Common myeloid progenitor, CD34-positive (primary cell): ENCODE measurements at regions of chr12 and their contacts with region 1.

Region 1: DNA sequence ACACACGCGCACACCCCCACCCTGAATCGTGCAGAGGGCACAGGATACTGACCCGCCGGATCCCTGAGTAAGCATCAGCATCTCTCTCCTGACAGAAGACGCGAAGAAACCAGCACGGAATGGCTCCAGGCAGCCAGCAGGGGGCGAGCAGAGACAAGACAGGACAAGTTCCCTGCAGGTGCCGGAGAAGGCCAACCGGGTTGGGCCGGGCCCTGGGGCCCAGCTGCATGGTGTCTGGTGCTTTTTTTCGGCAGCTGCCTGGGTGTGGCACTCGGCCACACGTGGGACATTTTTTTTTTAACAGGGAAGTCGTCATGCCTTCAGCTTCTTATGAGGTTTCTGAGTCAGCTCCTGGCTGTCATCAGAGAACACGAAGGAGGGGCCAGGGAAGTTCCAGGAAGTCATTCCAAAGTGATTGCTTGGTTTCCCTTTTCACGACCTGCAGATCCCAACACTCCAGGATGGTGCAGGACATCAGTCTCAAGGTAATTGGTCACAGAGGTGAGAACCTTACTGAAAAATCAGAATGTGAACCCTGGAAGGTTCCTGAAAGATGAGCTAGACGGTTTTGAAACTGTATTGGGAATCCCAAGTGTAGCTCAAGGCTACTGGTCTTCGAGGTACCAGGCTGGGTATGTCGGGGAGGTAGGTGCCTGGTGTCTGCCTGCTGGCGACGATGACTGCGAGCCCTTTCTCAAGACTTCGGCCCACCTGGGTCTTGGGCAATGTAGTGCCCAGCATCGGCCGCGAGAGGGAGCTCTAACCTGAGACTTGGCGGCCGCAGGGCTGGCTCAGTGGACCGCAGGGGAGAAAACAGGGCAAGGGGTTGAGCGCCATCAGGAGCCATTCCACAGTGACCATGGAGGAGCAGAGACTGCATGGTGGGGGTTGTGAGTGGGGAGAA is 190.8 kb upstream of the PRMT8 start:
- DNase-seq: peak; percentile 87 to 91 (median 90)
- H3K4me3 ChIP-seq: peak overlapping the region in 2 of 7 experiments; percentile 10 to 25
- H3K27ac ChIP-seq: no peak overlapping the region
- H3K4me1 ChIP-seq: peaks cover 0 to 9% (median 4%) of the 10 kb centered on the region in 4 experiments
- H3K27me3 ChIP-seq: peaks cover 0 to 66% (median 13%) of the 10 kb centered on the region in 5 experiments

Region 2: DNA sequence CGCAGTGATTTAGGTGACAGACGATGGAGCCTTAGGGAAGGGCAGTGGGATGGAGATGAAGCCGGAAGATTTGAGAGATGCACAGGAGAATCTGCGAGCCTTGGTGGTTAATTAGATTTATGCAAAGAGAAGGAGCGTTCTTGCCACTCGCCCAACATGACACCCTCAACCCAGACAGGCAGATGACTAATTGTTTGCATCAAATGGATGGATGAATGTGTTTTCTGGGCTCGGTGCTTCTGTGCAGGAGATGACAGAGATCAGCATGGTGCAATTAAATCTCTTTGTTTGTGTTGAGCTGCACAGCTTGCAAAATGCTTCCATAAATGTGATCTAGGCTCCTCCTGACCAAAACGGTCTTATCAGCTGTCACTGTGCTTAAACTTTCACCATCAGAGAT is 11.5 kb before region 1 on chr12:
- CTCF ChIA-PET with region 1: interaction called, 38 read pairs
- POLR2A ChIA-PET with region 1: no interaction called
- DNase-seq: no peak
- H3K4me3 ChIP-seq: no peak overlapping the region
- H3K27ac ChIP-seq: no peak overlapping the region
- H3K4me1 ChIP-seq: peaks cover 0 to 15% (median 2%) of the 10 kb centered on the region in 4 experiments
- H3K27me3 ChIP-seq: peaks cover 2 to 79% (median 5%) of the 10 kb centered on the region in 5 experiments

Region 3: DNA sequence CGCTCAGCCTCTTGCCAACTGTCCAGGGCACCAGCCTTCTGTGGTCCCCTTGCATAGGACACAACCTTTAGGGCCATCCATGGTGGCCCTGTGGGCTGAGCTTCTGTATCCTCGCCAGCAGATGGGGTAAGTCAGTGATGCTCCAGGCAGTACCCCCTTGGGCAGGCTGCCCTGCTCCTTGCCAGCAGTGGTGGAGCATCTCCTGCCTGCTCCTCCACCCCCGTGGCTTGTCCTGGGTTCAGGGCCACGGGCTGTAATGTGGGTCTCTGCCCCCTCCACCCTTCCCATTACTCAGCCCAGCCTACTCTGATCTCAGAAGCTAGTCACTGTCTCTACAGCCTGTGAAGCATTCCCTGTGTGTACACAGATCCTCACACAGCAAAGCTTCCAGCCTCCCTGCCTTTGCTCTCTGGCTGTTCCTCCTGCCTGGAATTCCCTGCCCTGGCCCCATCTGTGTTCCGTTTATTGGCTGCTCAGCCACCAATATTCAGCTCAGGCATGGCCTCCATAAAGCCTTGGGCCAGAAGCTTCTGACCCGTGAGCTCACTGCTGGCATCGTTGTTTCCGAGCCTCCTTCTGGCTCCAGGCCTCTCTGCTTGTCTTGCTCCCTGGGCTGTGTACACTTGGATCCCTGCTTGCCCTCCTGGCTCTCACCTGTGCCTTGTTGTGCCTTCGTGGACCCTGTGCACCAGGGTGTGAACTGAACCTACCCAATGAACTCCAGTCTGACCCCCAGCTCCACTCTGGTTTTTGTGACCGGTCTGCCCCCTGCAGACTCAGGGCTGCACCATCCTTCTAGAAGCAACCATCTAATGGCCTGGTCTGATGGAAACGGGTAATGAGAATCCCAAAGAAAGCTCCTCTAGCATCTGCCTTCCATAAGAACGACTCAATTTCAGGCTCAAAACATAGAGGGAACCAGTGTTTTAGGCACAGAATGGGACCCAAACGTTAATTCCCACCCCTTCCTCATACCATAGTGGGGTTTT is 13.8 kb after region 1 on chr12:
- CTCF ChIA-PET with region 1: interaction called, 38 read pairs
- POLR2A ChIA-PET with region 1: no interaction called
- DNase-seq: peak; percentile 44 to 64 (median 62)
- H3K4me3 ChIP-seq: no peak overlapping the region
- H3K27ac ChIP-seq: no peak overlapping the region
- H3K4me1 ChIP-seq: no peaks in the 10 kb centered on the region
- H3K27me3 ChIP-seq: peaks cover 0 to 21% (median 15%) of the 10 kb centered on the region in 5 experiments

Region 4: DNA sequence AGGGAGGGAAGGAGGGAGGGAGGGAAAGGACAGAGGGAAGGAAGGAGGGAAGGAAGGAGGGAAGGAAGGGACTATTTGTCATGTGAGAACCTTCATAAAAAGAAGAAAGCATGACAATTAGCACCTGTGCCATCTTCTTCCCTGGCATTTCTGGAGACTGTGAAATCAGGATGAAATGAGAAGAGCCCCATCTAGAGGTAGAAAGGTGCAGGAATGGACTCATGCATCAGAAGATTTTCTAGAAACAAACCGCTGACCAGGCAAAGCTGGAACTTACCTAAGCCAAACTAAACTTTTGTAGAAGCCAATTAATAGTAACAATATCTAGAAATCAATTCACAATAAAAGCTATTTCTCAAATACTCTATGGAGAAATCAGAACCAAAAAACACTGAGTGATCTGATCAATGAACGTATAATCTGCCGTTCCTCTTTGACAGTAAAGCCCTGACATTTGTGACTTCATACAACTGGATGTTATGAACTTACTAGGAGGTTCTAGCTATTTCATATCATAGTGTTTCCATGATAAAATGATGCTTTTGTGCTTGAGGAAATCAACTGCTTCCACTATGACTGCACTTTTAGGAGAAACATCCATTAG is 477.1 kb after region 1 on chr12:
- CTCF ChIA-PET with region 1: interaction called, 13 read pairs
- POLR2A ChIA-PET with region 1: no interaction called
- DNase-seq: peak; percentile 40 to 59 (median 47)
- H3K4me3 ChIP-seq: no peak overlapping the region
- H3K27ac ChIP-seq: no peak overlapping the region
- H3K4me1 ChIP-seq: no peaks in the 10 kb centered on the region
- H3K27me3 ChIP-seq: peaks cover 0 to 2% (median 0%) of the 10 kb centered on the region in 5 experiments

Region 5: GRCh38 chr12:3803865-3804472 is 503.8 kb after region 1 on chr12:
- CTCF ChIA-PET with region 1: interaction called, 34 read pairs
- POLR2A ChIA-PET with region 1: no interaction called
- DNase-seq: peak; percentile 69 to 79 (median 71)
- H3K4me3 ChIP-seq: no peak overlapping the region
- H3K27ac ChIP-seq: no peak overlapping the region
- H3K4me1 ChIP-seq: no peaks in the 10 kb centered on the region
- H3K27me3 ChIP-seq: no peaks in the 10 kb centered on the region